ENCODE measurements at regions of chr1 and their contacts with region 1.

Region 1: GRCh38 chr1:156689035-156689952 is 12.1 kb upstream of the NES start:
- DNase-seq: peak; percentile 81
- ATAC-seq: peak; percentile 77
- H3K4me3 ChIP-seq: peak overlapping the region; percentile 41 to 55
- H3K27ac ChIP-seq: peak overlapping the region; percentile 49
- H3K4me1 ChIP-seq: peaks cover 70 to 90% of the 10 kb centered on the region in 2 experiments
- H3K27me3 ChIP-seq: no peaks in the 10 kb centered on the region
- CTCF ChIP-seq: peak in 2 of 3 experiments; percentile 69 to 87; a peak in 4 of 6 replicates
- POLR2A ChIP-seq: no peak
- RAD21 ChIP-seq: no peak

Region 2: GRCh38 chr1:156648951-156649350 is 40.3 kb before region 1 on chr1:
- CTCF ChIA-PET with region 1: no interaction called
- POLR2A ChIA-PET with region 1: no interaction called
- RAD21 ChIA-PET with region 1: no interaction called
- intact Hi-C with region 1: no loop called
- DNase-seq: no peak
- ATAC-seq: no peak
- H3K4me3 ChIP-seq: no peak overlapping the region
- H3K27ac ChIP-seq: no peak overlapping the region
- H3K4me1 ChIP-seq: no peaks in the 10 kb centered on the region
- H3K27me3 ChIP-seq: no peaks in the 10 kb centered on the region
- CTCF ChIP-seq: no peak
- POLR2A ChIP-seq: no peak
- RAD21 ChIP-seq: no peak

Region 3: GRCh38 chr1:156659994-156660751 is 29.1 kb before region 1 on chr1:
- CTCF ChIA-PET with region 1: interaction called, 18 read pairs
- POLR2A ChIA-PET with region 1: interaction called, 13 read pairs
- RAD21 ChIA-PET with region 1: interaction called in 1 of 2 experiments, 3 read pairs
- intact Hi-C with region 1: no loop called
- DNase-seq: peak; percentile 94
- ATAC-seq: peak; percentile 74
- H3K4me3 ChIP-seq: peak overlapping the region; percentile 69 to 90
- H3K27ac ChIP-seq: peak overlapping the region; percentile 99
- H3K4me1 ChIP-seq: peaks cover 46 to 77% of the 10 kb centered on the region in 2 experiments
- H3K27me3 ChIP-seq: no peaks in the 10 kb centered on the region
- CTCF ChIP-seq: peak in 2 of 3 experiments; percentile 99; a peak in 4 of 6 replicates
- POLR2A ChIP-seq: peak; percentile 76
- RAD21 ChIP-seq: no peak

Region 4: GRCh38 chr1:156705918-156706656 is 16.8 kb after region 1 on chr1:
- CTCF ChIA-PET with region 1: interaction called, 310 read pairs
- POLR2A ChIA-PET with region 1: interaction called, 87 read pairs
- RAD21 ChIA-PET with region 1: interaction called, 24 to 45 read pairs
- intact Hi-C with region 1: loop called (anchors 1 kb)
- DNase-seq: no peak
- ATAC-seq: peak; percentile 61
- H3K4me3 ChIP-seq: peak overlapping the region; percentile 62 to 63
- H3K27ac ChIP-seq: peak overlapping the region; percentile 89
- H3K4me1 ChIP-seq: peaks cover 72 to 87% of the 10 kb centered on the region in 2 experiments
- H3K27me3 ChIP-seq: no peaks in the 10 kb centered on the region
- CTCF ChIP-seq: peak in 2 of 3 experiments; percentile 80 to 92; a peak in 4 of 6 replicates
- POLR2A ChIP-seq: peak; percentile 24
- RAD21 ChIP-seq: no peak

Region 5: DNA sequence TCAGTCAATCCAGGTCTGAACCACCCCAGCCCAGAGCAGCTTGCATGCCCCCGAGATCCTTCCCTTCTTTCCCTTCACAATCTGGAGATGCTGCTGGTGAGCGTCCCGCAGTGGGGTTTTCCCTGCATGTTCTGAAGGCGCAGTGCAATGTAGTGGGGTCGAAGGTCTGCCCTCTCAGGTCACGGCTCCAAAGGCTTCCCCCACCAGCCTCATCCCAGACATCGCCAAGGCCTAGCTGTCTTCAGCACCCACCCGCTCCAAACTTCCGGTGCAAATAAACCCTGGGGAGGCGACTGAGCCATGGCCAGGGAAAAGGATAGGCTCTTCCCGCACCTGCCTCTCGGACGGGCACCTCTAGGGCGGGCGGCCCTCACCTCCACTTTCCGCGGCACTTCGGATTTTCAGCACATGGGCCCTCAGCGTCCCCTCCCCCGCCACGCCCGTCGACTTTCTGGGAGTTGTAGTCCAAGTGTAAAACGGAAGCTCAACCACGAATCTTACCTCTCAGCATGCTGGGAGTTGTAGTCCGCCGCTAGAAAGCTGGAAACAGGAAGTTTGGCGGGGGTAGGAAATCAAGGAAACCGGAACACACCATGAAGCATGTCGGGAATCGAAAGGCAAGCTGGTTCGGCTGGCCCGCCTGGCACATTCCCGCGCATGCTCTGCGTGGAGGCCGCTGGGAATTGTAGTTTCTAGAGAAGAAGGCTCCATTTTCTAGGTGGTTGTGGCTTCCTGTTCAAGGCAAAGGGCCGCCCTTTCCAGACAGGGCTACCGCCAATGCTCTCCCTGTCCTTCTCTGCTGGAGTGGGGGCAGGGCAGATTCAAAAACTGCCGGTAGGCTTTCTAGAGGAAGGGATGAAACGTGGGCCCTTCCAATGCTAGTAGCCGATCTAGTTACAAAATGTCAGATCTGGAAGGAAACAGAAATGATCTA is 51.7 kb after region 1 on chr1 and contains the start of gene MRPL24:
- CTCF ChIA-PET with region 1: interaction called, 12 read pairs
- POLR2A ChIA-PET with region 1: interaction called, 3 read pairs
- RAD21 ChIA-PET with region 1: interaction called in 1 of 2 experiments, 4 read pairs
- intact Hi-C with region 1: no loop called
- DNase-seq: peak; percentile 100
- ATAC-seq: peak; percentile 88
- H3K4me3 ChIP-seq: peak within 1 kb of the TSS; percentile 67 to 80
- H3K27ac ChIP-seq: peak within 1 kb of the TSS; percentile 84
- H3K4me1 ChIP-seq: peaks cover 14 to 29% of the 10 kb centered on the region in 2 experiments
- H3K27me3 ChIP-seq: no peaks in the 10 kb centered on the region
- CTCF ChIP-seq: no peak
- POLR2A ChIP-seq: peak; percentile 64
- RAD21 ChIP-seq: no peak
- total RNA-seq, gene MRPL24: 111 TPM

Region 6: GRCh38 chr1:156860113-156860627 is 170.9 kb after region 1 on chr1:
- CTCF ChIA-PET with region 1: interaction called, 104 read pairs
- POLR2A ChIA-PET with region 1: interaction called, 4 read pairs
- RAD21 ChIA-PET with region 1: interaction called, 16 to 23 read pairs
- intact Hi-C with region 1: loop called (anchors 1 kb)
- DNase-seq: peak; percentile 28
- ATAC-seq: peak; percentile 89
- H3K4me3 ChIP-seq: peak overlapping the region; percentile 30 to 55
- H3K27ac ChIP-seq: no peak overlapping the region
- H3K4me1 ChIP-seq: peaks cover 4 to 17% of the 10 kb centered on the region in 2 experiments; a peak in 3 of 4 replicates
- H3K27me3 ChIP-seq: peaks cover 3% of the 10 kb centered on the region; the same call in 1 of the 2 replicates
- CTCF ChIP-seq: peak; percentile 82 to 94 (median 83)
- POLR2A ChIP-seq: no peak
- RAD21 ChIP-seq: peak; percentile 96

Region 7: DNA sequence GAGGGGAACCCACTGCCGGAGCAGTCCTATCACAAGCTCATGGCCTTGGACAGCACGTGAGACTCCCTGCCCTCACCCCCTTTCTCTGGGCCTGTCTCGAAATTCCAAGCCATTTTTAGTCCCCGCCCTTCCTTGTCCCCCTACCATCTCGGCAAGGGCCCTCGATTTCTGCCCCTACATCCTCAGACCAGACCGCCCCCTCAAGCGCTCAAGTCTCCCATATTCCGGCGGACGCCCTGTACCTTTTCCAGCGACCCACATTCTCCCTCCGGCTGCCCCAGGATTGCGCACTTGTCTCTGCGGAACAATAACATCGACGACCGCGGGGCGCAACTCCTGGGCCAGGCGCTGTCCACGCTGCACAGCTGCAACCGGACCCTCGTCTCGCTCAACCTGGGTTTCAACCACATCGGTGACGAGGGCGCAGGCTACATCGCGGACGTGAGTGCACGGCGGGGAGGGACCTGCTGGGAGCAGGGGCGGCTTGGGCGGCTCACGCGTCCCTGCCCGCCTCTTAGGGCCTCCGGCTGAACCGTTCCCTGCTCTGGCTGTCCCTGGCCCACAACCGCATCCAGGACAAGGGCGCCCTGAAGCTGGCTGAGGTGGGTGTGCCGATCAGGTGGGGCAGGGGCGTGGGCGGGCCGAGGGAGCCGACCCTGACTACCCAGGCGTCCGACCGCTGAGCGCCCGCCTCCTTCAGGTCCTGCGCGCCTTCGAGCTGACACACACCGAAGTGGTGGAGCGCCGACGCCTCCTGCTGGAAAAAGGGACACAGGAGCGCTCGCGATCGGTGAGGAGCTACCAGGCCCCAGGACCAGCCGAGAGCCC is 238.1 kb after region 1 on chr1:
- CTCF ChIA-PET with region 1: interaction called, 11 read pairs
- POLR2A ChIA-PET with region 1: no interaction called
- RAD21 ChIA-PET with region 1: interaction called, 3 read pairs
- intact Hi-C with region 1: loop called (anchors 5 kb)
- DNase-seq: peak; percentile 66
- ATAC-seq: peak; percentile 89
- H3K4me3 ChIP-seq: peak overlapping the region; percentile 38 to 59
- H3K27ac ChIP-seq: peak overlapping the region; percentile 12; the same call in 1 of the 2 replicates
- H3K4me1 ChIP-seq: peaks cover 20 to 31% of the 10 kb centered on the region in 2 experiments
- H3K27me3 ChIP-seq: peaks cover 6% of the 10 kb centered on the region; the same call in 1 of the 2 replicates
- CTCF ChIP-seq: peak; percentile 81 to 93 (median 81)
- POLR2A ChIP-seq: no peak
- RAD21 ChIP-seq: peak; percentile 97